ENCODE measurements at regions of chr3 and their contacts with region 1.

Region 1: DNA sequence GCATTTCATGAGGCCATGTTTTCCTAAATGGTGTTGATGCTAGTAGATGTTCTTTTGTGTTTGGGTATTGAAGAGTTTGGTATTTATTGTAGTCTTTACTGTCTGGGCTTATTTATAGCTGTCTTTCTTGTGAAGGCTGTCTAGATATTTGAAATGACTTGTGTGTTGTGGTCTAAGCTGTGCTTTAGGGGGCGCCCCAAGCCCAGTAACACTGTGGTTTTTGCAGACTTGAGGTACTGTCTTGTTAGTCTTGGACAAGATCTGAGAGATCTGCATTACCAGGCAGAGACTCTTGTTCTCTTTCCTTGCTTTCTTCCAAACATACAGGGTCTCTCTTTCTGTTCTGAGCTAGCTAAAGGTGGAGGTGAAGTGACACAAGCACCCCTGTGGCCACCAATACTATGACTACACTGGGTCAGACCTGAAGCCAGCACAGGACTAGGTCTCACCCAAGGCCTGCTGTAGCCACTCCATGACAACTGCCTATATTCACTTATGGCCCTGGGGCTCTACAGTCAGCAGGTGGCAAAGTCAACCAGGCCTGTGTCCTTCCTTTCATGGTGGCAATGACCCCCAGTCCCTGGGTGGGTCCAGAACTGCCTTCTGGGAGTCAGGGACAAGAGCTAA is 152.1 kb upstream of the TBC1D5 start:
- DNase-seq: no peak
- H3K4me3 Mint-ChIP-seq: no peak overlapping the region
- H3K27ac Mint-ChIP-seq: no peak overlapping the region
- H3K4me1 Mint-ChIP-seq: no peaks in the 10 kb centered on the region
- H3K27me3 Mint-ChIP-seq: peaks cover 2% of the 10 kb centered on the region

Region 2: GRCh38 chr3:18295171-18295920 is 400.8 kb after region 1 on chr3:
- intact Hi-C with region 1: loop called (anchors 10 kb)
- DNase-seq: no peak
- H3K4me3 Mint-ChIP-seq: no peak overlapping the region
- H3K27ac Mint-ChIP-seq: no peak overlapping the region
- H3K4me1 Mint-ChIP-seq: no peaks in the 10 kb centered on the region
- H3K27me3 Mint-ChIP-seq: peaks cover 19% of the 10 kb centered on the region